ENCODE measurements at regions of chr1 and their contacts with region 1.

Region 1: GRCh38 chr1:34460193-34460592 is 283.5 kb downstream of the C1orf94 start:
- DNase-seq: peak; percentile 37
- H3K4me3 ChIP-seq: no peak overlapping the region
- H3K27ac ChIP-seq: no peak overlapping the region
- H3K4me1 ChIP-seq: no peaks in the 10 kb centered on the region
- H3K27me3 ChIP-seq: no peaks in the 10 kb centered on the region
- CTCF ChIP-seq: peak; percentile 23; the same call in 1 of the 2 replicates
- EP300 ChIP-seq: no peak
- RAD21 ChIP-seq: peak; percentile 56

Region 2: GRCh38 chr1:34470401-34470800 is 10.2 kb after region 1 on chr1:
- CTCF ChIA-PET with region 1: interaction called, 19 read pairs
- POLR2A ChIA-PET with region 1: no interaction called
- DNase-seq: no peak
- H3K4me3 ChIP-seq: no peak overlapping the region
- H3K27ac ChIP-seq: no peak overlapping the region
- H3K4me1 ChIP-seq: no peaks in the 10 kb centered on the region
- H3K27me3 ChIP-seq: no peaks in the 10 kb centered on the region
- CTCF ChIP-seq: no peak
- EP300 ChIP-seq: no peak
- RAD21 ChIP-seq: no peak

Measured in SK-N-SH (cell line).